H1 (cell line): ENCODE measurements at regions of chr19 and their contacts with region 1.

Region 1: DNA sequence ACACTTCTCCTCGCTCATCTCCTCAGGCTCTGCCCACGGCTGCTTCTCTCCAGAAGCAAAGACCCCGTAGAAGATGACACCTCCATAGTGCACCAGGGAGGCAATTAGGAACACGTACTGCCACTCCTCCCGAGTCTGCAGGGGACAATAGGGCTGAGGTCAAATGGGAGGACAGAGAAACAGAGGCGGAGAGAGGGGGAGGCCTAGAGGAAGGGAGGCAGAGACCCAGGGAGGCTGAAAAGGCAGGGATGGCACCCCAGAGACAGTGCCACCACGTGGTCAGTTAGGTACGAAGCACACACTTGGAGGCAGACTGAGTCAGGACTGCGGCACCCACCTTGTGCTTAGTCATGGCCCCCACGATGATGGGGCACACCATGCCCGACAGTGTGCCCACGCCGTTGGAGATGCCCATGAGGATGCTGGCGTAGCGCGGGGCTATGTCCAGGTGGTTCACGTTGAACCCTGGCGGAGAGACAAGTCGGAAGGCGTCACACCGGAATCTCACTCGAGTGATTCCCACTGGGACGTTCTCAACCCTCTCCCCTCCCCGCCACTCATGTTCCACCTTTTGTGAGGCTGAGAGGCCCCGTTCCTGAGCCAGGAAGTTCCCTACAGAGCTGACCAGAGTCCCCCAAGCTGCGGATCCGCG is 5.6 kb downstream of the GFY start:
- DNase-seq: no peak
- H3K4me3 ChIP-seq: no peak overlapping the region
- H3K27ac ChIP-seq: no peak overlapping the region
- H3K4me1 ChIP-seq: peaks cover 3 to 35% (median 23%) of the 10 kb centered on the region in 4 experiments
- H3K27me3 ChIP-seq: peaks cover 6 to 37% (median 33%) of the 10 kb centered on the region in 4 experiments; a peak in 6 of 7 replicates
- CTCF ChIP-seq: peak; percentile 55 to 85 (median 78)
- EP300 ChIP-seq: no peak
- POLR2A ChIP-seq: no peak
- RAD21 ChIP-seq: peak; percentile 32 to 49

Region 2: DNA sequence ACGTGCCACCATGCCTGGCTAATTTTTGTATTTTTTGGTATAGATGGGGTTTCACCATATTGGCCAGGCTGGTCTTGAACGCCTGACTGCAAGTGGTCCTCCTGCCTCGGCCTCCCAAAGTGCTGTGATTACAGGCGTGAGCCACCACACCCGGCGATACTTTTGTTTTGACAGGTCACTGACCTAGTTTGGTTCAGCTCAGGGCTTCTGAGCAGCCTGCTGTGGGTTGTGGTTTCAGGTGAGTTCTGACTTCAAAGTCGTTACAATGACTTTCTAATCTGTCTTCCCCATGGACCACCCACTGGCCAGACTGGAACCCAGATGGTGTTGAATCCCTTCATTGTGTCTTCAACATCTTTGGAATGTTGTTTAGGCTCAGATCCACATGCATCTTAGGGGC is 199.4 kb before region 1 on chr19:
- CTCF ChIA-PET with region 1: no interaction called
- POLR2A ChIA-PET with region 1: no interaction called
- DNase-seq: no peak
- H3K4me3 ChIP-seq: no peak overlapping the region
- H3K27ac ChIP-seq: no peak overlapping the region
- H3K4me1 ChIP-seq: no peaks in the 10 kb centered on the region
- H3K27me3 ChIP-seq: no peaks in the 10 kb centered on the region
- CTCF ChIP-seq: no peak
- EP300 ChIP-seq: no peak
- POLR2A ChIP-seq: no peak
- RAD21 ChIP-seq: no peak

Region 3: GRCh38 chr19:49403404-49404187 is 27.2 kb before region 1 on chr19:
- CTCF ChIA-PET with region 1: interaction called, 7 read pairs
- POLR2A ChIA-PET with region 1: interaction called, 21 read pairs
- DNase-seq: peak; percentile 49 to 77
- H3K4me3 ChIP-seq: peak overlapping the region in 3 of 4 experiments; percentile 12 to 23 (median 17); a peak in 2 of 8 replicates
- H3K27ac ChIP-seq: peak overlapping the region; percentile 69
- H3K4me1 ChIP-seq: peaks cover 5 to 28% (median 12%) of the 10 kb centered on the region in 4 experiments
- H3K27me3 ChIP-seq: no peaks in the 10 kb centered on the region
- CTCF ChIP-seq: no peak
- EP300 ChIP-seq: no peak; a peak in 1 of 3 replicates
- POLR2A ChIP-seq: peak in 1 of 2 experiments; percentile 71; a peak in 2 of 3 replicates
- RAD21 ChIP-seq: no peak; a peak in 1 of 4 replicates

Region 4: GRCh38 chr19:49409441-49410029 is 21.3 kb before region 1 on chr19:
- CTCF ChIA-PET with region 1: interaction called, 8 read pairs
- POLR2A ChIA-PET with region 1: interaction called, 13 read pairs
- DNase-seq: no peak
- H3K4me3 ChIP-seq: no peak overlapping the region
- H3K27ac ChIP-seq: no peak overlapping the region
- H3K4me1 ChIP-seq: peaks cover 0 to 5% (median 0%) of the 10 kb centered on the region in 4 experiments; a peak in 1 of 7 replicates
- H3K27me3 ChIP-seq: no peaks in the 10 kb centered on the region
- CTCF ChIP-seq: no peak
- EP300 ChIP-seq: no peak
- POLR2A ChIP-seq: no peak
- RAD21 ChIP-seq: no peak

Region 5: DNA sequence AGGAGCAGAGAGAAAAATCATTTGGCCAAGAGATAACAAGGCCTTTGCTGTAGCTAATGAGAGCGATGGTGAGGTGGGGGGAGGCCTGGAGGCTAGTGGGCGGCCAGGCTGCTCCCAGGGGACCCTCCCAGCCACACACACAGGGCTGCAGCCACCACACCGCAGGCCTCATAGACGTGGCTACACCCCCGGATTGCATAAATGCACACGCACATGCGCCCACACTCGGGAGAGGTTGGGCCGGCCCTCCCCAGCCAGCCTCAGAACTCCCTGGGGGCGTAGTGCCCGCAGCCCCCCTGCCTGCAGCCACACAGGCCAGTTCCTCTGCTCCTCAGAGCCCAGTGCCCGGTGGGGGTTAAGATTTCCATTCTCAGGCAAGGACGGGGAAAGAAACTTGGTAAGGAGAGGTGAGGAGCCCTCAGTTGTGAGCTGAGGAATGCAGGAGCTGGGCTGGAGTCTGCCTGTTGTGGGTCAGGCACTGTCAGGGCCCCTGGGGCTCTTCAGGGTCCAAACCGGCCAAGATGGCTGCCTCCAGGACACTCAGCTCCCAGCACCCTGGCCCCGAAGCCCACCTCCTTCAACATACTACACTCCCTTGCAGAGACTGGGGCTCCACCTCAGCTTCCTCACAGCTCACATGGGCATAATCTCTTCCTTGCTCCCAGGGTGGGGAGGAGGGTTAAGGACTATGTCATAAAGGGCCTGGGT is 15.5 kb before region 1 on chr19:
- CTCF ChIA-PET with region 1: interaction called, 11 read pairs
- POLR2A ChIA-PET with region 1: interaction called, 13 read pairs
- DNase-seq: no peak
- H3K4me3 ChIP-seq: no peak overlapping the region
- H3K27ac ChIP-seq: no peak overlapping the region
- H3K4me1 ChIP-seq: peaks cover 0 to 18% (median 11%) of the 10 kb centered on the region in 4 experiments; a peak in 5 of 7 replicates
- H3K27me3 ChIP-seq: no peaks in the 10 kb centered on the region
- CTCF ChIP-seq: no peak
- EP300 ChIP-seq: no peak
- POLR2A ChIP-seq: no peak
- RAD21 ChIP-seq: no peak

Region 6: DNA sequence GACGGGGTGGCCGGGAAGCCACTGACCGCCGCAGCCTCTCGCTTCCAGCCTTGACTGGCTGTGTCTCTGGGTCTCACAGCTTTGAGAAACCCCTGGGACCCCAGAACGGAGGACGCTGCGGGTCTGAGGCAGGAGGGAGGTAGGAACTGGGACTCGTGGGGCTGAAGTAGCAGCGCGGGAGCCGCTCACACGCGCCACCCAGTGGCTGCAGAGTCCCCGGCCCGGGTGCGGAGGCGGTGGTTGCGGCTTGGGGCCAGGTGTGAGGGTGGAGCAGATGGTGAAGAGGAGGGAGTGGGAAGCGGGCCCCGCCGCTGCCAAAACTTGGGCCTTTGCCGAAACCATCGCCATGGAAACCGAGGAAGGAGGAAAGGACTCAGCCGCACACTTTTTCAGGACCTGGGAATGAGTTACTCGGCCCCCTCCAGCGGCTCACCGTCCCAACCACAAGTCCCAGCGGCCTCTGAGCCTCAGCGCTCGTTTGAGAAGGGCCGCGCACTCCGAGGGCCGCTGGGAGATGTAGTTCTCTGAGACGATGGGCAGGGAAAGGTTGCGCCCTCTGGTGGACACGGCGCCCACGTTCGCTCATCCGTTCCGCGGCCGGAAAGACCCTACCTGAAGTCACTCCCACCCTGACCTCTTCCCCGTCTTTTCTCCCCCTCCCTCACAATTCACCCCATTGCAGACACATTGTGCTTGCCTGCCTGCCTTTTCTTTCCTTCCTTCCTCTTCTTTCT is 12.7 kb after region 1 on chr19:
- CTCF ChIA-PET with region 1: interaction called, 12 read pairs
- POLR2A ChIA-PET with region 1: interaction called, 8 read pairs
- DNase-seq: peak; percentile 91 to 98
- H3K4me3 ChIP-seq: peak overlapping the region; percentile 38 to 69 (median 62)
- H3K27ac ChIP-seq: peak overlapping the region; percentile 53
- H3K4me1 ChIP-seq: peaks cover 0 to 14% (median 12%) of the 10 kb centered on the region in 4 experiments; a peak in 6 of 7 replicates
- H3K27me3 ChIP-seq: peaks cover 18 to 26% (median 25%) of the 10 kb centered on the region in 4 experiments
- CTCF ChIP-seq: peak; percentile 87 to 98 (median 89)
- EP300 ChIP-seq: no peak
- POLR2A ChIP-seq: no peak; a peak in 2 of 3 replicates
- RAD21 ChIP-seq: peak; percentile 72 to 76